Activated CD4-positive, alpha-beta T cell treated with anti-CD3 and anti-CD28 coated beads, Interleukin-2, amount 10 ng/mL, durations not matched to agents 7 days and 5 days (primary cell): ENCODE measurements at regions of chr13 and their contacts with region 1.

Region 1: DNA sequence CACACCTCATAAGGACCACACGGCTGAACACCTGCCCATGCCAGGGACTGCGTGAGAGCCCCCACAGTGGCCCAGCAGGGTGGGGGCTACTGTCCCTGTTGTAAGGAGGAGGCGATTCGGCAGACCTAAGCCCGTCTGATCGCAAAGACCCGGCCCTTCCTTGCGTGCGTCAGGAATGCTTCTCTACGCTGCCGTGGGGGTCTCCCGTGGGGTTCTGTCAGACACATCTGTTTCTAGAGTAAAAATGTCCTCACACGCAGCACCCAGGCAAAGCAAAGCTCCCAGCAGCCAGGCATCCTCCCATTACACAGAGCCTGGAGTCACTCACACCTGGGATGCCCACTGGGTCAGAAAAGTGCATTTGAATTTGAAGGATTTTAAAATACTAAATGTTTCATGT is 147.7 kb upstream of the SOX1 start:
- DNase-seq: no peak
- H3K4me3 Mint-ChIP-seq: no peak overlapping the region
- H3K27ac Mint-ChIP-seq: no peak overlapping the region
- H3K4me1 Mint-ChIP-seq: no peaks in the 10 kb centered on the region
- H3K27me3 Mint-ChIP-seq: no peaks in the 10 kb centered on the region

Region 2: GRCh38 chr13:111286162-111286561 is 633.1 kb before region 1 on chr13:
- CTCF ChIA-PET with region 1: no interaction called
- POLR2A ChIA-PET with region 1: no interaction called
- DNase-seq: no peak
- H3K4me3 Mint-ChIP-seq: no peak overlapping the region
- H3K27ac Mint-ChIP-seq: no peak overlapping the region
- H3K4me1 Mint-ChIP-seq: no peaks in the 10 kb centered on the region
- H3K27me3 Mint-ChIP-seq: no peaks in the 10 kb centered on the region

Region 3: DNA sequence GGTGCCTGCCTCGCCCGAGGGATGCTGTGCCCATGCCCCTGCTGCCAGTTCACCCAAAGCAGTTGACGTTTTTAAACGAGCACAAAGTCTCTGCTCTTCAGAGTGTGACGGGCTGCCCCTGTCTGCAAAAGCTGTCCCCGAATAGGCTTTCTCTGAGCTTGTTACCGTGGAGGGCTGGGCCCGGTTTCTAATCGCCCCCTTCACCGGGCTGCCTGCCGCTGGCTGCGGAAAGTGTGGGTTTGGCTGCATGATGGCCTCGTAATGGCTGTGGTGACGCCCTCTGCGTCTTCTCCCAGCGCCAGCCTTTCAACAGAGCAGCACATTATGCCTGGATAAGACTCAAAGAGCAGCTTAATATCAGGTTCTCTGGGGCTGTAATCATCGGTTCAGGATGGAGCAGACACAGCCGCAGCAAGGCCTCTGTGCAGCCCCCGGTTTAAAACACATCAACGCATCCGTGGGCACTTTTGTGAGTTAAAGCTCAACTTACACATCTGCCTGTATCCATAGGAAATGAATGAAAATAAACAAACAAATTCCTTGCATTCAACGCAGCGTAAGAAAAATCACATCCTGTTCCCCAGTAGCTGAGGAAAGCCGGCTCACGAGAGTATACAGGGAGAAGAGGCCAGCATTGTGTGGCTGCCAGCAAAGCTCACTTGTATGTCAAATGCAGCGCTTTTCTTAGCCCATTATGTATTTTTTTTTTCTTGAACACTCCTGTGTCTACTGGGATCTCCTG is 18.7 kb before region 1 on chr13:
- CTCF ChIA-PET with region 1: no interaction called
- POLR2A ChIA-PET with region 1: interaction called, 18 read pairs
- DNase-seq: no peak
- H3K4me3 Mint-ChIP-seq: no peak overlapping the region
- H3K27ac Mint-ChIP-seq: no peak overlapping the region
- H3K4me1 Mint-ChIP-seq: no peaks in the 10 kb centered on the region
- H3K27me3 Mint-ChIP-seq: no peaks in the 10 kb centered on the region